GM12878 (cell line): ENCODE measurements at regions of chr5 and their contacts with region 1.

Region 1: GRCh38 chr5:138975098-138975847 is 100.1 kb upstream of the LRRTM2 start:
- DNase-seq: no peak
- ATAC-seq: peak; percentile 65
- H3K4me3 ChIP-seq: no peak overlapping the region
- H3K27ac ChIP-seq: no peak overlapping the region
- H3K4me1 ChIP-seq: peaks cover 8% of the 10 kb centered on the region
- H3K27me3 ChIP-seq: no peaks in the 10 kb centered on the region
- CTCF ChIP-seq: no peak
- EP300 ChIP-seq: no peak
- POLR2A ChIP-seq: no peak
- RAD21 ChIP-seq: no peak

Region 2: GRCh38 chr5:138962619-138963370 is 12.5 kb before region 1 on chr5:
- CTCF ChIA-PET with region 1: no interaction called
- POLR2A ChIA-PET with region 1: no interaction called
- RAD21 ChIA-PET with region 1: no interaction called
- SMC1A ChIA-PET with region 1: interaction called, 12 read pairs
- in situ Hi-C with region 1: no loop called
- intact Hi-C with region 1: no loop called
- DNase-seq: no peak
- ATAC-seq: no peak
- H3K4me3 ChIP-seq: no peak overlapping the region
- H3K27ac ChIP-seq: no peak overlapping the region
- H3K4me1 ChIP-seq: no peaks in the 10 kb centered on the region
- H3K27me3 ChIP-seq: no peaks in the 10 kb centered on the region
- CTCF ChIP-seq: no peak
- EP300 ChIP-seq: no peak
- POLR2A ChIP-seq: no peak
- RAD21 ChIP-seq: no peak

Region 3: DNA sequence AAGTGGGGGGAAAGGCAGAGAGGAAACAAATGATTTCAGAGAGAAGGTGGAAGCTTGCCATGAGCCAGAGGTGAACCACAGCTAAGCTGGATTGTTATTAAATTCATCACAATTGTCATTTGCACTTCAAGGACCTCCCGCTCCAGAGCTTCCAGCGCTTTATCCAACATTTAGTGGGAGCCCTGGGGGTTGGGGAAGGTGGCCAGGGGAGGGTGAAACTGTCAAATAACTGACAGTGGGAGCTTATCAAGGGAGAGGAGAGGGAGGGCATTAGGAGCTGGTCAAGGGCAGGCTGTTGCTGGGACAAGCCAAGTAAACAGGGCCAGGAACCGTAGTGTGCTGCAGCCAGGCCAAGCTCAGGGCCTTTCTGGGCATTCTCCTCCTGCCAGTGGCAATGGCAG is 151.4 kb after region 1 on chr5:
- CTCF ChIA-PET with region 1: no interaction called
- POLR2A ChIA-PET with region 1: no interaction called
- RAD21 ChIA-PET with region 1: no interaction called
- SMC1A ChIA-PET with region 1: no interaction called
- in situ Hi-C with region 1: no loop called
- intact Hi-C with region 1: no loop called
- DNase-seq: no peak
- ATAC-seq: no peak
- H3K4me3 ChIP-seq: no peak overlapping the region
- H3K27ac ChIP-seq: no peak overlapping the region
- H3K4me1 ChIP-seq: no peaks in the 10 kb centered on the region
- H3K27me3 ChIP-seq: no peaks in the 10 kb centered on the region
- CTCF ChIP-seq: no peak
- EP300 ChIP-seq: no peak
- POLR2A ChIP-seq: no peak
- RAD21 ChIP-seq: no peak